Heart left ventricle (tissue), 16 donors: ENCODE measurements at regions of chr2 and their contacts with region 1.

Region 1: GRCh38 chr2:108583903-108584520 is 49.7 kb downstream of the LIMS1 start:
- DNase-seq: peak in 4 of 5 donors; percentile 50 to 74 (median 66)
- ATAC-seq: peak; percentile 71 to 80 (median 78)
- H3K4me3 ChIP-seq: no peak overlapping the region
- H3K27ac ChIP-seq: peak overlapping the region in 4 of 12 donors; percentile 9 to 51 (median 18)
- H3K4me1 ChIP-seq: peaks cover 3 to 68% (median 44%) of the 10 kb centered on the region in 12 donors
- H3K27me3 ChIP-seq: no peaks in the 10 kb centered on the region
- CTCF ChIP-seq: peak; percentile 65 to 92 (median 77)
- POLR2A ChIP-seq: no peak

Region 2: GRCh38 chr2:107936433-107937359 is 647.3 kb before region 1 on chr2:
- intact Hi-C with region 1: loop called in 1 of 10 experiments (anchors 5 kb)
- DNase-seq: no peak
- ATAC-seq: no peak
- H3K4me3 ChIP-seq: no peak overlapping the region
- H3K27ac ChIP-seq: no peak overlapping the region
- H3K4me1 ChIP-seq: no peaks in the 10 kb centered on the region
- H3K27me3 ChIP-seq: peaks cover 0 to 20% (median 0%) of the 10 kb centered on the region in 9 donors
- CTCF ChIP-seq: peak; percentile 19 to 55 (median 40)
- POLR2A ChIP-seq: no peak

Region 3: GRCh38 chr2:108215794-108216211 is 368.2 kb before region 1 on chr2:
- intact Hi-C with region 1: loop called in 5 of 10 experiments (anchors 5 to 10 kb)
- DNase-seq: no peak
- ATAC-seq: peak in 2 of 4 donors; percentile 33 to 44
- H3K4me3 ChIP-seq: no peak overlapping the region
- H3K27ac ChIP-seq: no peak overlapping the region
- H3K4me1 ChIP-seq: no peaks in the 10 kb centered on the region
- H3K27me3 ChIP-seq: no peaks in the 10 kb centered on the region
- CTCF ChIP-seq: peak in 10 of 12 donors; percentile 5 to 38 (median 22)
- POLR2A ChIP-seq: no peak

Region 4: GRCh38 chr2:108396845-108397244 is 187.2 kb before region 1 on chr2:
- intact Hi-C with region 1: loop called in 1 of 10 experiments (anchors 5 kb)
- DNase-seq: no peak
- ATAC-seq: no peak
- H3K4me3 ChIP-seq: no peak overlapping the region
- H3K27ac ChIP-seq: no peak overlapping the region
- H3K4me1 ChIP-seq: no peaks in the 10 kb centered on the region
- H3K27me3 ChIP-seq: no peaks in the 10 kb centered on the region
- CTCF ChIP-seq: peak in 1 of 12 donors; percentile 6
- POLR2A ChIP-seq: no peak

Region 5: GRCh38 chr2:108485253-108485652 is 98.8 kb before region 1 on chr2:
- intact Hi-C with region 1: loop called in 2 of 10 experiments (anchors 5 to 10 kb)
- DNase-seq: no peak
- ATAC-seq: no peak
- H3K4me3 ChIP-seq: no peak overlapping the region
- H3K27ac ChIP-seq: no peak overlapping the region
- H3K4me1 ChIP-seq: no peaks in the 10 kb centered on the region
- H3K27me3 ChIP-seq: no peaks in the 10 kb centered on the region
- CTCF ChIP-seq: no peak
- POLR2A ChIP-seq: no peak